ENCODE measurements at regions of chr10 and their contacts with region 1.

Region 1: GRCh38 chr10:97731346-97732051 is 5.4 kb upstream of the ZFYVE27 start:
- DNase-seq: peak; percentile 66
- ATAC-seq: peak; percentile 61 to 79

Region 2: GRCh38 chr10:97676770-97677581 is 54.5 kb before region 1 on chr10:
- intact Hi-C with region 1: loop called (anchors 1 to 2 kb)
- DNase-seq: peak; percentile 50
- ATAC-seq: peak in 1 of 2 donors; percentile 62

Region 3: GRCh38 chr10:97701438-97702069 is 29.9 kb before region 1 on chr10:
- intact Hi-C with region 1: loop called (anchors 5 kb)
- DNase-seq: no peak
- ATAC-seq: peak; percentile 93 to 94

Region 4: DNA sequence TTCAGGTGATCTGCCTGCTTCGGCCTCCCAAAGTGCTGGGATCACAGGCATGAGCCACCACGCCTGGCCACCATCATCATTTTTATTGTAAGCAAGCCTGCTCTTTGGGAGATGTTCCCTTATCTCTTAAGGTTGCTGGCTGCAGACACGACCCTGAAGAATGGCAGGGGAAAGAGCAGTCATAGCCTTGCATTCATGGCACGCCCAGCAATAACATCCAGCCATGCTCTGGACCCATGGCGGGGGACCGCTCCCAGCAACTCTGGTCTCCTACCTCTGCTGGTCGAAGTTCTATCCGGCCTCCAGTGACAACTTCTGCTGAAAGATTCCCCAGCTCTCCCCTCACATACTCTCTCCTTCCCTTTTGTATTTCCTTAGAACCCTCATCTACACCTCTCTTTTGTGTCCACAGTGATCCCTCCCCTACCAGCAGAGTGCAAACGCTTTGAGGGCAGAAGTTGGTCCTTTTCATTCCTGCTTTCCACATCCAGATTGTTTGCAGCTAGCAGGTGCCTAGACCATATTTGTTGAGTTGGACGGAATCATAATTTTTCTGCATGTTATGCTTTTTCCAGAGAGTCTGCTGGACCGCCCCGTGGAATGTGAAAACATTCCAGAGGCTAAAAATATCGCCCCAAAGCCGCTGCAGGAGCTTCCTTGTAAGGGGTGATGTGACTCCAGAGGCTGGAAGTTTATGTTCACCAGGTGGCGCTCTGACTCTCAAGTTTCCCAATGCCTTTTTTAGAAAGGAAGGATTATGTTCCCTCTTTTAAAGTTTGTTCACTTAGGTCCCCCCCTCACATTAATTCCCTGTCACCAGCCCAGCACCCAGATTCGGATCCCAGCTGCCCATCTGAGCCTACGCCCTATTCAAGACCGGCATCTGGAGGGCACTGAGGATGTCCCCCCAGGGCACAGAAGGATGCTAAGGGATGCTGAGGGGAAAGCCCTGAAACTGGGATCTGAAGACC is 22.2 kb before region 1 on chr10:
- intact Hi-C with region 1: loop called (anchors 2 to 5 kb)
- DNase-seq: peak; percentile 76
- ATAC-seq: peak; percentile 21 to 49

Measured in left cardiac atrium (tissue), 4 donors.